Activated T-helper 1 cell treated with anti-CD3 and anti-CD28 coated beads, Interleukin-12 subunit alpha, Interleukin-12 subunit beta, Interleukin-2, Interleukin-4 antibody, amounts not matched to agents 30 ng/mL and 10 ng/mL and 1 ng/mL, durations not matched to agents 14 hours and 24 hours and 36 hours (primary cell): ENCODE measurements at regions of chr19 and their contacts with region 1.

Region 1: DNA sequence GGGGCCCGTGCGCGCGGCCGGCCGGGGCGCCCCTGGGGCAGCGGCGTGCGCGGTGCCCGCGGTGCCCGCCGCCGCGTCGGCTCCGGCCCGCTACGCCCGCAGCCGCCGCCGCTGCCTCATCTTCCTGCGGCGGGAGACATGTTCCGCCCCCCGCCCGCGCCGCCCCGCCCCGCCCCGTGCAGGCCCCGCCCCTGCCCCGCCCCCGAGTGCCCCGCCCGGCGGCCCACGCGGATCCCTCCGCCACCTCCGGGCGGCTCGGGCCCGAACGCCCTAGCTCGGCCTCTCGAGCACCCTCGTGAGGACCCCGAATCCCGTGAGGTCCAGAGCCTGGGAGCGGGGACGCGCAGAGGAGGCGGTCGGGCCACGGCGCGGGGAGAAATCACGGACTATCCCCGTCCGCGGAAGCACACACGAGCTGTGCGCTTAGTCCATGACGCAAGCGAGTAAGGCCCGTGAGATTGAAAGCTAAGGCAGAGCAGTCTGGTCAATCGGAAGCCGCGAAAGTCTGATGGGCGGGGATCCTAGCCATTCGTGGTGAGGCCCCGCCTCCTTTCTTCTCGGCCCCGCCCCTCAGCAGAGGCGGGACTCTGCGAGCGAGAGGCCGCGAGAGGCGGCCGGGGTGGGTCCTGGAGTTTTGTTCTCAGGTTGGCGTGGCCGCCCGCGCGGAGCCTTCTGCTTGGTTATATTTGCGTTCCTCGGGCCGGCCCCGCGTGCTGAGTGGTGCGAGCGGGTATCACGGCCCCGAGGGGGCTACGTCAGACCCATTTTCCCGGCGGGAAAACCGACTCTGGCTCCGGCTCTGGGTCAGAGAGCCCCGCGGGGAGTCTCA is at the start of gene TCF3:
- DNase-seq: peak; percentile 98
- H3K4me3 Mint-ChIP-seq: peak within 1 kb of the TSS; percentile 95
- H3K27ac Mint-ChIP-seq: peak within 1 kb of the TSS; percentile 97
- H3K4me1 Mint-ChIP-seq: peaks cover 16% of the 10 kb centered on the region
- H3K27me3 Mint-ChIP-seq: peaks cover 1% of the 10 kb centered on the region
- total RNA-seq, gene TCF3: 163 and 172 TPM in 2 replicates

Region 2: GRCh38 chr19:1624458-1624857 is 28.2 kb before region 1 on chr19:
- intact Hi-C with region 1: no loop called
- DNase-seq: peak; percentile 18
- H3K4me3 Mint-ChIP-seq: no peak overlapping the region
- H3K27ac Mint-ChIP-seq: no peak overlapping the region
- H3K4me1 Mint-ChIP-seq: no peaks in the 10 kb centered on the region
- H3K27me3 Mint-ChIP-seq: no peaks in the 10 kb centered on the region

Region 3: GRCh38 chr19:2168619-2169424 is 516.1 kb after region 1 on chr19:
- intact Hi-C with region 1: loop called (anchors 5 kb)
- DNase-seq: peak; percentile 37
- H3K4me3 Mint-ChIP-seq: peak overlapping the region; percentile 81
- H3K27ac Mint-ChIP-seq: peak overlapping the region; percentile 87
- H3K4me1 Mint-ChIP-seq: peaks cover 53% of the 10 kb centered on the region
- H3K27me3 Mint-ChIP-seq: peaks cover 1% of the 10 kb centered on the region